ENCODE measurements at regions of chr3 and their contacts with region 1.

Region 1: DNA sequence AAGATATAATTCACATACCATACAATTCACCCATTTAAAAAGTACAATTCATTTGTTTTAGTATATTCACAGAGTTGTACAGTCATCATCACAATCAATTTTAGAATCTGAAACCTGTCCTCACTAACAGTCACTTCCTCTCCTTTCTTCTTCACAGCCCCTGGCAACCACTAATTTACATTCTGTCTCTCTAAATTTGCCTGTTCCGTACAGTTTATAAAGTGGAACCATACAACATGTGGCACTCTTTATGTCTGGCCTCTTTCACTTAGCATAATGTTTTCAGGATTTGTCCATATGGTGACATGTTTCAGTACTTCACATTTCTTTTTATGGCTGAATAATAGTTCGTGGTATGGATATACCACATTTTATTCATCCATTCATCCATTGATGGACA is 22.7 kb downstream of the ERICH6 start:
- DNase-seq: peak; percentile 68
- H3K4me3 Mint-ChIP-seq: peak overlapping the region; percentile 18
- H3K27ac Mint-ChIP-seq: peak overlapping the region; percentile 25
- H3K4me1 Mint-ChIP-seq: peaks cover 20% of the 10 kb centered on the region
- H3K27me3 Mint-ChIP-seq: peaks cover 4% of the 10 kb centered on the region

Region 2: GRCh38 chr3:150462108-150462507 is 218.9 kb before region 1 on chr3:
- intact Hi-C with region 1: no loop called
- DNase-seq: no peak
- H3K4me3 Mint-ChIP-seq: no peak overlapping the region
- H3K27ac Mint-ChIP-seq: no peak overlapping the region
- H3K4me1 Mint-ChIP-seq: no peaks in the 10 kb centered on the region
- H3K27me3 Mint-ChIP-seq: no peaks in the 10 kb centered on the region

Region 3: DNA sequence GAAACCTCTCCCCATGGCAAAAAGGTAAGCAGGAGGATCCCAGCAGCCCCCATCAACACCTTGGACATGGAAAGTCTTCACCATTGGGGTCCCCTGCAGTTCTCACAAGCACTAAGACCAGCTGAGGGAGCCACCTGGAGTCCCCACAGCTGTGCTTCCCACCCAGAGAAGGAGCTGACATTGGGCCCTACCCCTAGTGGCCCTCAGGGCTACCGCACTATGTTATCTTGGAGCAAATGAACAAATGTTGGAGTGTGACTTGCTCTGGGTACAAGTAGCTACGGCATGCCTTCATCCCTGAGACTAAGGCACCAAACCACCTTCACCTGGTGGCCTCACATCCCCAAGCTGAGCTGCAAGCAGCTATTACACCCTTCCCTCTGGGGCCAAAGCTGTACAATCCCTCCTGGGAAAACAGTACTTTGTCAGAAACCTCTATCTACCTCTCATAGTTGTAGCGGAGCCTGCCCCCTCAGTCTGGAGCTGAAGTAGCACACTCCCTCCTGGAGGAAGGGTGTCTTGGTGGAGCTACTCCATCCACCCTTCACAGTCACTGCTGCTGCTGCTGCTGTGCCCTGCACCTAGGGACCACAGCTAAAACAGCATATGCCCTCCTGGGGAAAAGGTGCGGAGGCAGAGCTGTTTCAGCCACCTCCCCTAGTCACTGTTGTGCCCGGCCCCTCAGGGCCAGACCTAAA is 177.5 kb before region 1 on chr3:
- intact Hi-C with region 1: no loop called
- DNase-seq: no peak
- H3K4me3 Mint-ChIP-seq: no peak overlapping the region
- H3K27ac Mint-ChIP-seq: no peak overlapping the region
- H3K4me1 Mint-ChIP-seq: peaks cover 1% of the 10 kb centered on the region
- H3K27me3 Mint-ChIP-seq: peaks cover 24% of the 10 kb centered on the region

Region 4: GRCh38 chr3:150582620-150583019 is 98.4 kb before region 1 on chr3:
- intact Hi-C with region 1: loop called (anchors 1 kb)
- DNase-seq: no peak
- H3K4me3 Mint-ChIP-seq: no peak overlapping the region
- H3K27ac Mint-ChIP-seq: peak overlapping the region; percentile 78
- H3K4me1 Mint-ChIP-seq: peaks cover 18% of the 10 kb centered on the region
- H3K27me3 Mint-ChIP-seq: no peaks in the 10 kb centered on the region

Region 5: DNA sequence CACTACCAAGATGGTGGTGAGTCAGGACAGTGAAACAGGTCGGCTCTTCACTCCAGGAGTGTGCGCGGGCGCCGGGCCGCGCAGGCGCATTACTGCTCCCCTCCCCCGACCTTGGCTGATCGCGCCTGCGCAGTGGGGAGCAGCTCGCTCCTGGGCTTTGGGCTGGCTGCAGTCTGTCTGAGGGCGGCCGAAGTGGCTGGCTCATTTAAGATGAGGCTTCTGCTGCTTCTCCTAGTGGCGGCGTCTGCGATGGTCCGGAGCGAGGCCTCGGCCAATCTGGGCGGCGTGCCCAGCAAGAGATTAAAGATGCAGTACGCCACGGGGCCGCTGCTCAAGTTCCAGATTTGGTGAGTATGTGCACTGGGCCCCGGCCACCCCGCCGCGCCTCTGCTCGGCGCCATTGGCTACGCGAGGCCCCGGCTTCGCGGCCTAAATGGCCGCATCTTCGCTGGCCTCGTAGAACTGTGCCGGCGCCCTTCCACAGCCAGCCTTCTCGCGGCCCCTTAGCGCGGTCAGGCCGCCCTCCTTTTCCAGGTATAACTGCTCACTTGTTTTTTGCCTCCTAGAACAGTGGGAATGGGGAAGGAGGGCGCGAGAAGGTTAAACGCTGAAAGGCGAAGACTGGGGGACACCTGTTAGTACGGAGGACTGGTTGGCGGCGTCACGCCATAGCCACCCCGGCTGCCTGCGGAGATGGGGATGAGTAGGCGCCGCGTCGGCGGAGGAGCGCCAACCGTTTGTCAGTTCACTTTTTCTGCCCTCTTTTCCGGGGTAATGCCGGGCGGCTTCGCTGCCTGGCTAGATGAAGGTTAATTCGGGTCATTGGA is 77.7 kb before region 1 on chr3 and contains the start of gene SELENOT:
- intact Hi-C with region 1: loop called (anchors 1 kb)
- DNase-seq: peak; percentile 99
- H3K4me3 Mint-ChIP-seq: peak within 1 kb of the TSS; percentile 98
- H3K27ac Mint-ChIP-seq: peak within 1 kb of the TSS; percentile 99
- H3K4me1 Mint-ChIP-seq: peaks cover 50% of the 10 kb centered on the region
- H3K27me3 Mint-ChIP-seq: no peaks in the 10 kb centered on the region
- total RNA-seq, gene SELENOT: 127 and 135 TPM in 2 replicates

Region 6: DNA sequence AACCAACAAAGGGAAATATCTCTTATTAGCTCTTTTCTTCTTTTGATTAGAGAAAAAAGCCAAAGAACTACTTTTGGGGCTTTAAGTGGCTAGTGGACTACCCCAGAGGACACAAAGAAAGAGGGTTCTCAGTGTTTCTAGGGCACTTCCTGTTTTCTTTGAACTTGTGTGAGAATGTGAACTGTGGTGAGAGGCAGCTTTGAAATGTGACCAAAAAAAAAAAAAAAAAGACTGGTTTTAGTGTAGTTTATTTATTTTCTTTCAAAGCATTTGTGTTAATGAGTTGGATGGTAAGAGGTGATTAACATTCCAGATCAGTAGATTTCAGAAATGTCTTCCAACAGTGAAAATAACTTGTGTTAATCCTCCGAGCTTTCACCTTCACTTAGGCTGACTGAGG is 45.5 kb before region 1 on chr3:
- intact Hi-C with region 1: loop called (anchors 5 kb)
- DNase-seq: peak; percentile 60
- H3K4me3 Mint-ChIP-seq: peak overlapping the region; percentile 11
- H3K27ac Mint-ChIP-seq: peak overlapping the region; percentile 11
- H3K4me1 Mint-ChIP-seq: peaks cover 19% of the 10 kb centered on the region
- H3K27me3 Mint-ChIP-seq: no peaks in the 10 kb centered on the region

Region 7: DNA sequence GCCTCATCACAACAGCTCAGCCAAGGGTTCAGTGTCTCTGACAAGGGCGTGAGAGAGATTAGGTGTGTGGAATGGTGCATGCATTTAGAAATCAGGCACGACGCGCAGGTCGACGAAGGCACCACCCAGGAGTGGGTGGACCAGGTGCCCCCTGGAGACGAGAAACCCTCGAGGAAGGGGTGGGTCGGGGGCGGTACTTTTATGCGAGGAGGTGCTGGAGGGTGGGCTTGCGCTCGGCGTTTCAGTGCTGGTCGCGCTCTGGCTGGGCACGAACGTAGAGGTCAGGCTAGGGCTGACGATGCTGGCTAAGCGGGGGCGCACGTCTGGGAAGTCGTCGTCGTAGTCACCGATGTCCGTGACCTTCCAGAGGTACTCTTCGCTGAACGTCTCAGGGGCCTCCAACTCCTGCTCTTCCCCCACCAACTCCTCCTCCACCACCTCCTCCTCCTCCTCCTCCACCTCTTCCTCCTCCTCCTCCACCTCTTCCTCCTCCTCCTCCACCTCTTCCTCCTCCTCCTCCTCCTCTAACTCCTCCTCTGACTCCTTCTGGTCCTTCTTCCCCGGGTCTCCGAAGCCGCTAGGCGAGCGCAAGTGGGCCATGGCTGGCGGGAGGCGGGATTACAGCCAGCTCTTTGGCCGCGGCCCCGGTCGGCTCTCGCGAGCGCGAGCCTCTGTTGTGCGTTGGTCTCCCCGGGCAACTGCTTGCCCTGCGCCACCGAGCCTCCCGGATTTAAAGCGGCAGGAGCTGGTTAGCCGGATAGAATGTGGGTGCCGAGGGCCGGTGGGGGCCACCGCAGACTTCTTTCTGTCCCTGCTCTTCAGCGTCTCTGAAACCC is 22.5 kb after region 1 on chr3 and contains the start of gene ERICH6:
- intact Hi-C with region 1: loop called (anchors 1 kb)
- DNase-seq: peak; percentile 95
- H3K4me3 Mint-ChIP-seq: peak within 1 kb of the TSS; percentile 92
- H3K27ac Mint-ChIP-seq: peak within 1 kb of the TSS; percentile 99
- H3K4me1 Mint-ChIP-seq: peaks cover 28% of the 10 kb centered on the region
- H3K27me3 Mint-ChIP-seq: peaks cover 10% of the 10 kb centered on the region
- total RNA-seq, gene ERICH6: not detected in 2 replicates

Measured in activated CD4-positive, alpha-beta T cell treated with anti-CD3 and anti-CD28 coated beads, Interleukin-2, amount 10 ng/mL, durations not matched to agents 24 days and 14 days (primary cell).